AG04450 (cell line): ENCODE measurements at regions of chr11 and their contacts with region 1.

Region 1: DNA sequence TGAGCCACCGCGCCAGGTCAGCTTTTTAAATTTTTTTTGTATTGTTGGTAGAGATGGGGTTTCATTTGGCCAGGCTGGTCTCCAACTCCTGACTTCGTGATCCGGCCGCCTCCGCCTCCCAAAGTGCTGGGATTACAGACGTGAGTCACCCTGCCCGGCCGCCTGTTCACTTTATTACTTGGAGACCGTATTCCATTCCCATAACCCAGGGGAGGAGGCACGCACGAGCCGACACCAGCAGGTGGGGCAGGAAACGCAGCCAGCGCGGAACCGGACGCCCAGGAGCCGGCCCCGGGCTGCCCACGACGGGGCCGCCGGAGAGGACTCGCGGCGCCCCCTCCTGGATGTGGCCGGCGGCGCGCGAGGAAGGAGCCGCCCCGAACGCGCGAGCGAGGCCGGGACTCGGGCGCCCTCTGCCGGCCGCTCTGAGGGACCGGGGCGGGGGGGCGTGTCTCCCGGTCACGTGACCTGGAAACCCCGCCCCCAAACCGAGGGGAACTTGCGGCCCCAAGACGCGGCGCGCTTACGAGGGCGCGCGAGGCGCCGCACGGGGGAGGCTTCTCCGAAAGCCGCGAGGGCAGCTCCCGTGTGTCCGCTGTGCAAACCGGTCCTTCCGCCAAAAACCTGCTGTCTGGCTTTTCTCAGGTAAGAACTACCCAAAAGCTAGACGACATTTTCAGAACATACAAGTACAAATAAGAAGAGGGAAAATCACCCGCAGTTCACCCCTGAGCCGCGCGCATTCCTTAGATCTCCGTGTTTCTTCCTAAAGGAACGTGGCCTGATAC is 11.6 kb upstream of the RNH1 start:
- DNase-seq: peak; percentile 60
- H3K4me3 ChIP-seq: peak overlapping the region; percentile 39
- H3K27ac ChIP-seq: no peak overlapping the region
- H3K27me3 ChIP-seq: no peaks in the 10 kb centered on the region
- CTCF ChIP-seq: peak; percentile 69

Region 2: GRCh38 chr11:506238-506994 is 12.2 kb before region 1 on chr11:
- CTCF ChIA-PET with region 1: interaction called, 33 read pairs
- POLR2A ChIA-PET with region 1: interaction called, 3 read pairs
- DNase-seq: peak; percentile 97
- H3K4me3 ChIP-seq: peak overlapping the region; percentile 95
- H3K27ac ChIP-seq: peak overlapping the region; percentile 99
- H3K27me3 ChIP-seq: no peaks in the 10 kb centered on the region
- CTCF ChIP-seq: no peak